CD8-positive, alpha-beta memory T cell (primary cell): ENCODE measurements at regions of chr19 and their contacts with region 1.

Region 1: GRCh38 chr19:47273313-47273977 is 1.2 kb upstream of the INAFM1 start:
- DNase-seq: peak; percentile 82 to 92 (median 86)
- H3K4me3 ChIP-seq: peak overlapping the region; percentile 93
- H3K4me3 Mint-ChIP-seq: peak overlapping the region; percentile 96 to 99 (median 97)
- H3K27ac ChIP-seq: peak overlapping the region; percentile 97
- H3K27ac Mint-ChIP-seq: peak overlapping the region; percentile 97 to 100 (median 98)
- H3K4me1 ChIP-seq: peaks cover 15% of the 10 kb centered on the region
- H3K4me1 Mint-ChIP-seq: peaks cover 18 to 28% (median 24%) of the 10 kb centered on the region in 3 donors
- H3K27me3 ChIP-seq: no peaks in the 10 kb centered on the region
- H3K27me3 Mint-ChIP-seq: no peaks in the 10 kb centered on the region

Region 2: DNA sequence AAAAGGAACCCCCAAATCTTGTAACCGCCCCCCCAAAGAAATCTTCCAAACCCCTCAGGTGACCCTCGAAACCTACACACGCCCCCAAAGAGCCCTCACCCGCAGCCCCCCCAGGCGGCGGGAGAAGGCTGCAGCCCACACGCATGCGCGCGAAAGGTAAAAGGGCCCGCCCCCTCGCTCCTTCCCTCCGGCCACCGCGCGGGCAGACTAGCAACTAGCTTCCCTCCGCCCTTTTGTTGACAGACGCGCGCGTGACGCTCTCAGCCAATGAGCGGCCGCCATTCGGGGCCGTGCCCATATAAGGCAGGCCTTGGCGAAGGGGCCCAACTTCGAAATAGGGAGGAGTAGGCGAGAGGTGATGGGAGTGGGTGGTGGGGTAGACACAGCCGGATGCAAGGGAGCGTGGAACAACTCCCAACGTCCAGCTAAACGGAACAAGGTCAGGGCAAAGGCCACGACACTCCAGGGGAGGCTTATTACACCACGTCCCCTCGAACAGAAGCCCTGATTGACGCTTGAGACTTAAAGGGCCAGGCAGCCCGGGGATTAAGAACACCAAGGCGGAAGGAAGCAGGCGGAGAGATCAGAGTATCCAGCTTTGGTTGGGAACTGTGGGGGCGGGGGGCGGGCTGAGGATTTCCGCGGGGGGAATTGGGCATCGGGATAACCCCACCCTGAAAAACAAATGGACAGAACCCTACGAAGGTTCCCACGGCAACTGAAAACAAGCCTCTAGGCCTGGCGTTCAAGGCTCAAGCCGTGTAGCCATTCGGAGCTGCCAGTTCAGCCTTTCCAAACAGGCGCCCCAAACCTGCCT is 1556.1 kb before region 1 on chr19:
- CTCF ChIA-PET with region 1: no interaction called
- POLR2A ChIA-PET with region 1: interaction called, 10 read pairs
- DNase-seq: peak; percentile 97 to 99 (median 99)
- H3K4me3 ChIP-seq: peak overlapping the region; percentile 82
- H3K4me3 Mint-ChIP-seq: peak overlapping the region; percentile 86 to 97 (median 95)
- H3K27ac ChIP-seq: peak overlapping the region; percentile 83
- H3K27ac Mint-ChIP-seq: peak overlapping the region; percentile 83 to 99 (median 97)
- H3K4me1 ChIP-seq: peaks cover 24% of the 10 kb centered on the region
- H3K4me1 Mint-ChIP-seq: peaks cover 39 to 56% (median 49%) of the 10 kb centered on the region in 3 donors
- H3K27me3 ChIP-seq: no peaks in the 10 kb centered on the region
- H3K27me3 Mint-ChIP-seq: no peaks in the 10 kb centered on the region

Region 3: GRCh38 chr19:47075179-47075810 is 198.2 kb before region 1 on chr19:
- CTCF ChIA-PET with region 1: no interaction called
- POLR2A ChIA-PET with region 1: no interaction called
- DNase-seq: no peak
- H3K4me3 ChIP-seq: no peak overlapping the region
- H3K4me3 Mint-ChIP-seq: no peak overlapping the region
- H3K27ac ChIP-seq: no peak overlapping the region
- H3K27ac Mint-ChIP-seq: peak overlapping the region in 4 of 8 donors; percentile 7 to 67 (median 36)
- H3K4me1 ChIP-seq: no peaks in the 10 kb centered on the region
- H3K4me1 Mint-ChIP-seq: peaks cover 0 to 10% (median 6%) of the 10 kb centered on the region in 3 donors
- H3K27me3 ChIP-seq: no peaks in the 10 kb centered on the region
- H3K27me3 Mint-ChIP-seq: no peaks in the 10 kb centered on the region

Region 4: GRCh38 chr19:47256688-47257443 is 16.6 kb before region 1 on chr19:
- CTCF ChIA-PET with region 1: interaction called, 9 read pairs
- POLR2A ChIA-PET with region 1: interaction called, 67 read pairs
- DNase-seq: peak; percentile 96 to 99 (median 98)
- H3K4me3 ChIP-seq: peak overlapping the region; percentile 61
- H3K4me3 Mint-ChIP-seq: peak overlapping the region; percentile 81 to 93 (median 90)
- H3K27ac ChIP-seq: peak overlapping the region; percentile 84
- H3K27ac Mint-ChIP-seq: peak overlapping the region; percentile 92 to 97 (median 96)
- H3K4me1 ChIP-seq: peaks cover 23% of the 10 kb centered on the region
- H3K4me1 Mint-ChIP-seq: peaks cover 34 to 47% (median 37%) of the 10 kb centered on the region in 3 donors
- H3K27me3 ChIP-seq: no peaks in the 10 kb centered on the region
- H3K27me3 Mint-ChIP-seq: peaks cover 0 to 1% of the 10 kb centered on the region in 2 donors

Region 5: GRCh38 chr19:47284324-47284899 is 11.0 kb after region 1 on chr19:
- CTCF ChIA-PET with region 1: interaction called, 25 read pairs
- POLR2A ChIA-PET with region 1: no interaction called
- DNase-seq: peak; percentile 28 to 60 (median 44)
- H3K4me3 ChIP-seq: no peak overlapping the region
- H3K4me3 Mint-ChIP-seq: no peak overlapping the region
- H3K27ac ChIP-seq: no peak overlapping the region
- H3K27ac Mint-ChIP-seq: no peak overlapping the region
- H3K4me1 ChIP-seq: no peaks in the 10 kb centered on the region
- H3K4me1 Mint-ChIP-seq: peaks cover 3 to 15% (median 6%) of the 10 kb centered on the region in 3 donors
- H3K27me3 ChIP-seq: no peaks in the 10 kb centered on the region
- H3K27me3 Mint-ChIP-seq: no peaks in the 10 kb centered on the region

Region 6: DNA sequence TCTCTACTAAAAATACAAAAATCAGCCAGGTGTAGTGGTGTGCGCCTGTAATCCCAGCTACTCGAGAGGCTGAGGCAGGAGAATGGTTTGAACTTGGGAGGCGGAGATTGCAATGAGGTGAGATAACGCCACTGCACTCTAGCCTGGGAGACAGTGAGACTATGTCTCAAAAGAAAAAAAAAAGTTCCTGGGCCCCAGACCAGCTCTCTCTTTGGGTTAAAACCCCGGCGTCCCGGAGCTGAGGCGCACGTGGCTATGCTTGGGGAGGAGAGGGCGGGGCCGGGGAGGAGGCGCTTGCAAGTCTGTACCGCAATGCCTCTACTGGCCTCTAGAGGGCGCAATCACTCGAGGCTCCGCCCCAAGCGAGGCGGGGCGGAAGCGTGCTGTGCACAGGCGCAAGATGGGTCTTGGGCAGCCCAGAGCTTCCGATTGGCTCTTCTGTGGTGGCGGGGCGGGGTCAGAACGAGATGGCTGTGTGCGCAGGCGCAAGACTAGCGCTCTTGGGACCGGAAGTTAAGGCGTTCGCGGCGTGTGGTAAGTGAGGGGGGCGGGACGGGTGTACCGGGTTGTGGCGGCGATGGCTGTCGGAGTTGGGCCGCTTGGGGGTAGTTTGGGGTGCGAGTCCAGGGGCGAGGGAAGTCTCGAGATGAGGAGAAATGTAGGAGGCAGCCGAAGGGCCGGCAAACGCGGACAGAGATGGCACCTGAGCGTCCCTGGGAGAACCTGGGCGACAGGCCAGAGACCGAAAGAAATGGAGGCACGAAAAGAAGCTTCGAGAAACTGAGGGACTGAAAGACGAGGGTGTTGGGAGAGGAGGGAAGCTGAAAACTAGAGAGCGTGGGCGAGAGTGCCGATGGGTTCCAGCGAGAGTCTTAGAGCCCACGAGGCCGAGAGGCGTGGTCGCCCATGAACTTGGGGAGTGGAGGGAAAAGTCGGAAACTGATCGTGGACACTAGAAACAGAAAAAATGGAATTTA is 75.7 kb after region 1 on chr19 and contains the start of gene DHX34:
- CTCF ChIA-PET with region 1: interaction called, 16 read pairs
- POLR2A ChIA-PET with region 1: interaction called, 16 read pairs
- DNase-seq: peak; percentile 98 to 100 (median 99)
- H3K4me3 ChIP-seq: peak within 1 kb of the TSS; percentile 92
- H3K4me3 Mint-ChIP-seq: peak within 1 kb of the TSS; percentile 91 to 98 (median 96)
- H3K27ac ChIP-seq: peak within 1 kb of the TSS; percentile 73
- H3K27ac Mint-ChIP-seq: peak within 1 kb of the TSS; percentile 81 to 98 (median 94)
- H3K4me1 ChIP-seq: peaks cover 22% of the 10 kb centered on the region
- H3K4me1 Mint-ChIP-seq: peaks cover 32 to 48% (median 33%) of the 10 kb centered on the region in 3 donors
- H3K27me3 ChIP-seq: no peaks in the 10 kb centered on the region
- H3K27me3 Mint-ChIP-seq: peaks cover 0 to 5% of the 10 kb centered on the region in 2 donors
- total RNA-seq, gene DHX34: 23.2 to 24.5 TPM